GM12878 (cell line): ENCODE measurements at regions of chr11 and their contacts with region 1.

Region 1: DNA sequence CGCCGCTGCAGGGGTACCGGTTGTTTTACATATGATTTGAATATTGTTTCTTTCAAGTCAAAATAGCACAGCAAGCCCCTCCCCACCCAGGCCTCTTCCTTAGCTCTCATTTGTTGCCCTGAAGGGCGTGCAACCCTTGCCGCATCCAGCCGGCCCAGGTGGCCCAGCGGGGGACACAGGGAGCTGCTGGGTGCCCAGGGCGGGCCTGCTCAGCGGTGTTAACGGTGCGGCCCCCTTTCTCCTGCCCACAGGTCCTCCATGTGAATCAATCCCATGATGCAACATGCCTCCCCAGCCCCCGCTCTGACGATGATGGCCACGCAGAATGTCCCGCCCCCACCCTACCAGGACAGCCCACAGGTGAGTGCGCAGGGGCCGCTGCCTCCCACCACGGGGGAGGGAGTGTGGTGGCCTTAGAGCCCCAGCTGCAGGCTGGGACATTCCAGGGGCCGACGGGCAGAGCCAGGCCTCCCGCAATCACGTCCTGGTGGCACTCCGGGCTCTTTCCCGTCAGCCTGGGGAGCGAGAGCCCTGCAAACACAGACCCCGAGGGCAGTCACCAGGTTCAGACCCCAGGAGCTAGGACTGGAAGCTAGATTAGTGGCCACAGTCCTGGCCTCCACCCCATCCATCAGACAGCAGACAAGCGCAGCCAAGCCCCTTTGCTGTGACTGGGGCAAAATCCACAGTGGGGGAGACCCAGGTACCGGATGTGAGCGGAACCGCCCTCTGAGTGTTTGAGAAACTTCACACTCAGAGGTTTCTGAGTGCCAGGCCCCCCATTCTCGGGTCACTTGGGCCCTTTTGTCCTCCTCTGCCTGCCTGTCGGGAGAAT is 144.8 kb downstream of the FEZ1 start:
- DNase-seq: no peak
- ATAC-seq: no peak
- H3K4me3 ChIP-seq: no peak overlapping the region
- H3K27ac ChIP-seq: no peak overlapping the region
- H3K4me1 ChIP-seq: no peaks in the 10 kb centered on the region; the same call in 1 of the 2 replicates
- H3K27me3 ChIP-seq: peaks cover 0 to 7% of the 10 kb centered on the region in 2 experiments; a peak in 2 of 4 replicates
- CTCF ChIP-seq: no peak
- EP300 ChIP-seq: no peak
- POLR2A ChIP-seq: no peak
- RAD21 ChIP-seq: no peak

Region 2: GRCh38 chr11:125364121-125364826 is 13.0 kb after region 1 on chr11:
- CTCF ChIA-PET with region 1: interaction called, 44 read pairs
- POLR2A ChIA-PET with region 1: interaction called, 8 read pairs
- RAD21 ChIA-PET with region 1: interaction called, 343 read pairs
- SMC1A ChIA-PET with region 1: interaction called, 18 read pairs
- in situ Hi-C with region 1: no loop called
- intact Hi-C with region 1: no loop called
- DNase-seq: no peak
- ATAC-seq: peak; percentile 36; the same call in 2 of the 3 replicates
- H3K4me3 ChIP-seq: no peak overlapping the region
- H3K27ac ChIP-seq: no peak overlapping the region
- H3K4me1 ChIP-seq: no peaks in the 10 kb centered on the region
- H3K27me3 ChIP-seq: peaks cover 2% of the 10 kb centered on the region in 2 experiments; a peak in 2 of 4 replicates
- CTCF ChIP-seq: no peak
- EP300 ChIP-seq: no peak
- POLR2A ChIP-seq: no peak
- RAD21 ChIP-seq: no peak